SK-N-SH (cell line): ENCODE measurements at regions of chr1 and their contacts with region 1.

Region 1: DNA sequence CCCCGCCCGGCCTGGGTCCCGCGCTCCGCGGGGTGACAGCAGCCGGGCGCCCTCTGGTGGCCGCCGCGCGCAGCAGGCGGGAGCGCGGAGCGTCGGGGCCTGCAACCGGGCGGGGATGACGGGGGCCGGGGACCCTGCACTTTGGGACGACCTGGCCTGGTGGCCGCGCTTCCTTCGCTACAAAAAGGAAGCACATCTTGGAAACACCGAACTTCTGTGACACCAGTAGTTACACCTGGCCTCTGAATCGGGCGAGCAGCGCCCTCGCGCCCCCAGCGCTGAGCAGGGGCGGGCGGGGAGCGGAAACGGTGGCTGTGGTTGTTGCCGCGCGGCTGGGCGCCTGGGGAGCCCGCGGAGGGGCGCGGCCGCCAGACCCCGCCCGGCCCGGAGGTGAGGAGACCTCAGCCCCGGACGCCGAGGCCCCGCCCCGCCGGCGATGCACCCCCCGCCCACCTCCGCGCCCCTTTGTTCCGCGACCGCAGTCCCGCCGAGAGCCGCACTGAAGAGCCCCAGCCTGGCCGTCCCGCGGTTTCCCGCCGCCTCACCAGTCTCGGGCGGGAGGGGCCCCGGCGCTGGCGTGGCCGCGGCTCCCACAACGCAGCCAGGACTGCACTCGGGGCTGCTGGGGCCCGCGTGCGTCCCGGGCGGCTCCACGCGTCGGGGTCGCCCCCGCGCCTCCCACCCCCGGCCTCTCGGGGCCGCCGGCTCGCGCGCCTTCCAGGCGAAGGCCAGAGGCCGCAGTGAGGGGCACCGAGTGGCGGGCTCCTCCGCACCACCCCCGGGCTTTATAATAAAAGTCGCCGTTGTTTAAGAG is 59.3 kb downstream of the H3-3A start:
- DNase-seq: peak; percentile 98
- H3K4me3 ChIP-seq: peak overlapping the region; percentile 64 to 73
- H3K27ac ChIP-seq: peak overlapping the region in 1 of 2 experiments; percentile 90; a peak in 2 of 4 replicates
- H3K4me1 ChIP-seq: peaks cover 0 to 15% of the 10 kb centered on the region in 2 experiments; a peak in 2 of 4 replicates
- H3K27me3 ChIP-seq: no peaks in the 10 kb centered on the region
- CTCF ChIP-seq: peak; percentile 63
- EP300 ChIP-seq: no peak; a peak in 1 of 4 replicates
- RAD21 ChIP-seq: peak; percentile 73

Region 2: GRCh38 chr1:225944951-225945350 is 176.8 kb before region 1 on chr1:
- CTCF ChIA-PET with region 1: no interaction called
- POLR2A ChIA-PET with region 1: no interaction called
- DNase-seq: no peak
- H3K4me3 ChIP-seq: no peak overlapping the region
- H3K27ac ChIP-seq: no peak overlapping the region
- H3K4me1 ChIP-seq: peaks cover 0 to 16% of the 10 kb centered on the region in 2 experiments; a peak in 1 of 4 replicates
- H3K27me3 ChIP-seq: no peaks in the 10 kb centered on the region; the same call in 1 of the 2 replicates
- CTCF ChIP-seq: no peak
- EP300 ChIP-seq: no peak
- RAD21 ChIP-seq: no peak

Region 3: DNA sequence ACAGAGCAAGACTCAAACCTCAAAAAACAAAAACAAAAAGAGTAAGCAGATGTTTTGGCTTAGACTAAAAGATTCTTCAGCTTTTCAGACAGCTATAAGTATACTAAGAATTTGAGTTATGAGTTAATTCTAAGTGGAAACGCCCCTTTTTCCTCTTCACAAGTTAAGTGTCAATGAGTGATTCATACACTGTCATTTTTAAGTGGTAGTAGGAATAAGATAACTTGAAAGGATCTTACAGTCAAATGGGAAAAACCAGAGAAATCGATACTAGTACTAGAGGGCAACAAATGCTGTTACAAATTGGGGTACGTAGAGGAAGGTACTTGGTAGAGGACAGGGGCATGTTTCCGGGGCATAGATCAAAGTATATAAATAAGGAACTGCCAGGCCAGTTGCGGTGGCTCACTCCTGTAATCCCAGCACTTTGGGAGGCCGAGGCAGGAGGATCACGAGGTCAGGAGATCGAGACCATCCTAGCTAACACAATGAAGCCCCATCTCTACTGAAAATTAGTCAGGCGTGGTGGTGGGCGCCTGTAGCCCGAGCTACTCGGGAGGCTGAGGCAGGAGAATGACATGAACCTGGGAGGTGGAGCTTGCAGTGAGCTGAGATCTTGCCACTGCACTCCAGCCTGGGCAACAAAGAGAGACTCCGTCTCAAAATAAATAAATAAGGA is 51.8 kb before region 1 on chr1:
- CTCF ChIA-PET with region 1: interaction called, 104 read pairs
- POLR2A ChIA-PET with region 1: interaction called, 3 read pairs
- DNase-seq: no peak
- H3K4me3 ChIP-seq: no peak overlapping the region
- H3K27ac ChIP-seq: no peak overlapping the region
- H3K4me1 ChIP-seq: peaks cover 20 to 23% of the 10 kb centered on the region in 2 experiments; a peak in 3 of 4 replicates
- H3K27me3 ChIP-seq: no peaks in the 10 kb centered on the region
- CTCF ChIP-seq: no peak
- EP300 ChIP-seq: no peak
- RAD21 ChIP-seq: no peak

Region 4: DNA sequence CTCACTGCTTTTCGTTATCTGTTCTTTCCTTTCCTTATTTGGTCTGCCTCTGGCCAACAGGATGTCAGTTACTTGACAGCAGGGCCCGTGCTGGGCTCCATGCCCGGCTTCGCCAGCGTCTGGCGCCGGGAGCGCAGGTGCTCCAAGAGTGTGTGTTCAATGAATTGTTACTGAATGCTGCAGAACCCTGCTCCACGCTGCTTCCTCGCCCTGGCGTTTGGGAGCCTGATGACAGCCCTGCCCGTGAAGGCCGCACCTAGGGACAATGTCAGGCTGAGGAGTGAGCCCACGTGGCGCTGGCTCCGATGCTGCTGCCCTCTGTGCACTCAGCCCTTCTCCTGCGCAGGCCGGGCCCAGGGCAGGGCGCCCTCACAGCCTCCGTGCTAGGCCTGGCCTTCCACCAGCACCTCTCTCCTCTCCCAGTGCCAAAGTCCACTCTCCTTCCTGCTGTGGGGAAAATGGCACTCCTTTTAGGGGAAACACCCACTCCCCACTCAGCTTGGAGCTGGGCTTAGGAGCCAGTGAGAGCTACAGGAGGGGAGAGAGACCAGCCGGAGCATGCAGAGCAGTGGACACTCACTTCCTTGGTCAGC is 13.4 kb after region 1 on chr1:
- CTCF ChIA-PET with region 1: interaction called, 25 read pairs
- POLR2A ChIA-PET with region 1: no interaction called
- DNase-seq: peak; percentile 80
- H3K4me3 ChIP-seq: no peak overlapping the region
- H3K27ac ChIP-seq: no peak overlapping the region; a peak in 2 of 4 replicates
- H3K4me1 ChIP-seq: peaks cover 0 to 16% of the 10 kb centered on the region in 2 experiments; a peak in 1 of 4 replicates
- H3K27me3 ChIP-seq: no peaks in the 10 kb centered on the region
- CTCF ChIP-seq: no peak
- EP300 ChIP-seq: no peak
- RAD21 ChIP-seq: 0 out of 2 replicates have a peak, but pooled peaks have one; percentile 10

Region 5: GRCh38 chr1:226176870-226177269 is 55.1 kb after region 1 on chr1:
- CTCF ChIA-PET with region 1: interaction called, 48 read pairs
- POLR2A ChIA-PET with region 1: no interaction called
- DNase-seq: no peak
- H3K4me3 ChIP-seq: no peak overlapping the region
- H3K27ac ChIP-seq: no peak overlapping the region
- H3K4me1 ChIP-seq: no peaks in the 10 kb centered on the region; a peak in 2 of 4 replicates
- H3K27me3 ChIP-seq: no peaks in the 10 kb centered on the region
- CTCF ChIP-seq: no peak
- EP300 ChIP-seq: no peak
- RAD21 ChIP-seq: no peak

Region 6: GRCh38 chr1:226201029-226201593 is 79.3 kb after region 1 on chr1:
- CTCF ChIA-PET with region 1: interaction called, 126 read pairs
- POLR2A ChIA-PET with region 1: no interaction called
- DNase-seq: no peak
- H3K4me3 ChIP-seq: no peak overlapping the region
- H3K27ac ChIP-seq: no peak overlapping the region
- H3K4me1 ChIP-seq: no peaks in the 10 kb centered on the region
- H3K27me3 ChIP-seq: no peaks in the 10 kb centered on the region; the same call in 1 of the 2 replicates
- CTCF ChIP-seq: peak; percentile 49
- EP300 ChIP-seq: no peak
- RAD21 ChIP-seq: peak; percentile 43

Region 7: DNA sequence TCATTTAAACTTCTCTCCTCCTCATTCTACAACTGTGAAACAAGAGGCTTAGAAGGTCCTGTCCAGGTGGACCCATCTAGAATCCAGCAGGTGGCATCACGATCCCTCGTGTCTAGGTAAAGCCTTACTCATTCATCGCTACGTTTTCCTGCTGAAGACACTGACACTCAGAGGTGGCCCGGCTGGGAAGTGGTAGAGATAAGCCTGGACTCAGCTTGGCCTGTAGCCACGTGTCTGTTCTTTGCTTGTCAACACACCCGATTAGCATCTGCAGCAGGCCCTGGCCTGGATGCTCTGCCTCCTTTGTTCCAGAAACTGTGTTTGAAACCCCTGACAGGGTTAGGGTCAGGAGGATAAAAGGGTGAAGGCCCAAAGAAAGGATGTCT is 242.7 kb after region 1 on chr1:
- CTCF ChIA-PET with region 1: interaction called, 10 read pairs
- POLR2A ChIA-PET with region 1: no interaction called
- DNase-seq: peak; percentile 82
- H3K4me3 ChIP-seq: no peak overlapping the region
- H3K27ac ChIP-seq: peak overlapping the region in 1 of 2 experiments; percentile 91; a peak in 2 of 4 replicates
- H3K4me1 ChIP-seq: peaks cover 0 to 40% of the 10 kb centered on the region in 2 experiments; a peak in 2 of 4 replicates
- H3K27me3 ChIP-seq: no peaks in the 10 kb centered on the region
- CTCF ChIP-seq: no peak
- EP300 ChIP-seq: peak in 1 of 2 experiments; percentile 89; a peak in 2 of 4 replicates
- RAD21 ChIP-seq: peak; percentile 22

Region 8: DNA sequence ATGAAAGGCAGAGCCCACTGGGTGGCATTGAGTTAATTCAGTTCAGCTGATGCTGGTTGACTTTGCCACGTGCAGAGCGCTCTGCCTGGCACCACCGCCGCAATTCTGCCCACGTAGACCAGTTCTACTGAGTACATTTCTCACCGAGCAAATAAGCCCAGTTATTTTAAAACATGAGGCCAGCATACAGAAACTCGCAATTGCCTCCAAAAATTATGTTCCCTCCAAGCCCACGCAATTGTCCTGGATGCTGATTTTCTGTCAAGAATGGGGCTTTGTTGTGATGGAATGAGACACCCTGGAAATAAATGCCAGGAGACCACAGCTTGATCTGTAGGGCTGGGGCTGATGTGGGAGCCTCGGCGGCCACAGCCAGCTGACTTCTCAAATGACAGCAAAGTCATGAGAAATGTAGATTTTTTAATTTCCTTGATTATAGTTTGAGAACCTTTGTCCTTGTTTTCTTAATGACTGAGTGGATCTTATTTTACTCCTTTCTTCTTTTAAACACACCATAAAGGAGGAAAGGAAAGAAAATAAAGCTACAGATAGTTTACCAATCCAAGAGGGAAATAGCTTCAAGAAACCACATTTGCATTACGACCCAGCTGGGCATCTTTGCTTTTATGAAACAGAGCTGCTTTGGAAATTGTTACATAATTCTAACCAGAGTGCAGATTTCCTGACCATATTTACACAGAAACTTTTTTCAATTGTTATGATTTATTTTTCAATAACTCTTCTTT is 297.7 kb after region 1 on chr1:
- CTCF ChIA-PET with region 1: no interaction called
- POLR2A ChIA-PET with region 1: no interaction called
- DNase-seq: no peak
- H3K4me3 ChIP-seq: no peak overlapping the region
- H3K27ac ChIP-seq: no peak overlapping the region
- H3K4me1 ChIP-seq: no peaks in the 10 kb centered on the region
- H3K27me3 ChIP-seq: peaks cover 10% of the 10 kb centered on the region; the same call in 1 of the 2 replicates
- CTCF ChIP-seq: no peak
- EP300 ChIP-seq: no peak
- RAD21 ChIP-seq: no peak